Natural killer cell (primary cell): ENCODE measurements at regions of chr9 and their contacts with region 1.

Region 1: GRCh38 chr9:130042833-130043653 is at the start of gene FNBP1:
- DNase-seq: peak; percentile 80 to 89
- ATAC-seq: peak; percentile 75 to 87 (median 80)
- H3K4me3 ChIP-seq: peak within 1 kb of the TSS; percentile 92
- H3K4me3 Mint-ChIP-seq: peak within 1 kb of the TSS; percentile 99
- H3K27ac ChIP-seq: peak within 1 kb of the TSS; percentile 87
- H3K27ac Mint-ChIP-seq: peak within 1 kb of the TSS; percentile 97 to 99
- H3K4me1 ChIP-seq: peaks cover 44% of the 10 kb centered on the region
- H3K4me1 Mint-ChIP-seq: peaks cover 62 to 71% of the 10 kb centered on the region in 2 donors
- H3K27me3 ChIP-seq: no peaks in the 10 kb centered on the region
- H3K27me3 Mint-ChIP-seq: no peaks in the 10 kb centered on the region
- CTCF ChIP-seq: no peak
- total RNA-seq, gene FNBP1: 177 to 209 (median 203) TPM

Region 2: GRCh38 chr9:129884220-129885017 is 158.6 kb before region 1 on chr9:
- intact Hi-C with region 1: loop called (anchors 2 kb)
- DNase-seq: peak; percentile 90 to 99
- ATAC-seq: peak; percentile 60 to 81 (median 60)
- H3K4me3 ChIP-seq: peak overlapping the region; percentile 65
- H3K4me3 Mint-ChIP-seq: peak overlapping the region; percentile 86
- H3K27ac ChIP-seq: peak overlapping the region; percentile 98
- H3K27ac Mint-ChIP-seq: peak overlapping the region; percentile 98 to 99
- H3K4me1 ChIP-seq: peaks cover 61% of the 10 kb centered on the region
- H3K4me1 Mint-ChIP-seq: peaks cover 46 to 55% of the 10 kb centered on the region in 2 donors
- H3K27me3 ChIP-seq: no peaks in the 10 kb centered on the region
- H3K27me3 Mint-ChIP-seq: no peaks in the 10 kb centered on the region
- CTCF ChIP-seq: no peak

Region 3: GRCh38 chr9:129962889-129963703 is 79.9 kb before region 1 on chr9:
- intact Hi-C with region 1: loop called (anchors 1 kb)
- DNase-seq: peak; percentile 52 to 93
- ATAC-seq: peak; percentile 96 to 97 (median 97)
- H3K4me3 ChIP-seq: peak overlapping the region; percentile 48
- H3K4me3 Mint-ChIP-seq: peak overlapping the region; percentile 91
- H3K27ac ChIP-seq: peak overlapping the region; percentile 95
- H3K27ac Mint-ChIP-seq: peak overlapping the region; percentile 95 to 98
- H3K4me1 ChIP-seq: peaks cover 28% of the 10 kb centered on the region
- H3K4me1 Mint-ChIP-seq: peaks cover 54 to 65% of the 10 kb centered on the region in 2 donors
- H3K27me3 ChIP-seq: no peaks in the 10 kb centered on the region
- H3K27me3 Mint-ChIP-seq: no peaks in the 10 kb centered on the region
- CTCF ChIP-seq: no peak

Region 4: DNA sequence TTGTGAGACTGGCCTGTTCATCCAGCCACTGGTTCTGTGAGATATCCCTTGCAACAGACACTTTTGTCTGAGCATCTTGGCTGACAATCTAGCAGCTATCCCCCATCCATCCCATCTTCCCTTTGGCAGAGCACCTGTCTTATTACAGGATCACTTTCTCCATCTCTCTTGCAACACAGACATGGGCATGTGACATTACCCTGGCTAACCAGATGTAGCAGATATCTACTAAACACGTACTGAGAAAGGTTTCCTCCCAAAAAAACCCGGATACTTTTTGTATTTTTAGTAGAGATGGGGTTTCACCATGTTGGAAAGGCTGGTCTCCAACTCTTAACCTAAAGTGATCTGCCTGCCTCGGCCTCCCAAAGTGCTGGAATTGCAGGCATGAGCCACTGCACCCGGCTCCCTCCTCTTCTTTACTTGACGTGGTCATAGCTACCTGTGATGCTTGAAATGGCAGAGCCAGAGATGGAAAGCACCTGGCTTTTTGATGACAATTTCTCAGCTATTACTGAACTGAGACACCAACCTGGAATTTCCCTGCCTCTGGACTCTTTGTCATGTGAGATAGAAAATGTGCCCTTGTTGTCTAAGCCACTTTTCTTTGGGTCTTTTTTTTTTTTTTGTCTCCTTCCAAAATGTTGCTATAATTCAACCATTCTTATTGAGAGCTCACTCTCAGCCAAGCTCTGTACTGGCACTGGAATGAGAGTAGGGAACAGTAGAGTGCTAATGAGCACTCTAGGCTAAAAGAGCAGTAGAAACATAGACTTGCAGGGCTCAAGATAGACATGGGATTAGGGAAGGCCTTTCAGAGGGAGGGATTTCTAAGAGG is 32.7 kb before region 1 on chr9:
- intact Hi-C with region 1: loop called (anchors 2 kb)
- DNase-seq: peak in 1 of 2 donors; percentile 92
- ATAC-seq: peak; percentile 54 to 63 (median 60)
- H3K4me3 ChIP-seq: no peak overlapping the region
- H3K4me3 Mint-ChIP-seq: peak overlapping the region; percentile 32
- H3K27ac ChIP-seq: peak overlapping the region; percentile 89
- H3K27ac Mint-ChIP-seq: peak overlapping the region; percentile 84 to 87
- H3K4me1 ChIP-seq: peaks cover 46% of the 10 kb centered on the region
- H3K4me1 Mint-ChIP-seq: peaks cover 67 to 68% of the 10 kb centered on the region in 2 donors
- H3K27me3 ChIP-seq: no peaks in the 10 kb centered on the region
- H3K27me3 Mint-ChIP-seq: no peaks in the 10 kb centered on the region
- CTCF ChIP-seq: no peak